ENCODE measurements at regions of chr4 and their contacts with region 1.

Region 1: GRCh38 chr4:80434238-80434637 is 98.7 kb downstream of the CFAP299 start:
- DNase-seq: no peak
- H3K4me3 ChIP-seq: no peak overlapping the region
- H3K27ac ChIP-seq: no peak overlapping the region
- H3K4me1 ChIP-seq: no peaks in the 10 kb centered on the region
- H3K27me3 ChIP-seq: no peaks in the 10 kb centered on the region
- CTCF ChIP-seq: no peak
- EP300 ChIP-seq: no peak
- POLR2A ChIP-seq: no peak

Region 2: GRCh38 chr4:80492761-80493160 is 58.5 kb after region 1 on chr4:
- intact Hi-C with region 1: loop called (anchors 2 kb)
- DNase-seq: no peak
- H3K4me3 ChIP-seq: no peak overlapping the region
- H3K27ac ChIP-seq: no peak overlapping the region
- H3K4me1 ChIP-seq: no peaks in the 10 kb centered on the region
- H3K27me3 ChIP-seq: no peaks in the 10 kb centered on the region
- CTCF ChIP-seq: no peak
- EP300 ChIP-seq: no peak
- POLR2A ChIP-seq: no peak

Region 3: DNA sequence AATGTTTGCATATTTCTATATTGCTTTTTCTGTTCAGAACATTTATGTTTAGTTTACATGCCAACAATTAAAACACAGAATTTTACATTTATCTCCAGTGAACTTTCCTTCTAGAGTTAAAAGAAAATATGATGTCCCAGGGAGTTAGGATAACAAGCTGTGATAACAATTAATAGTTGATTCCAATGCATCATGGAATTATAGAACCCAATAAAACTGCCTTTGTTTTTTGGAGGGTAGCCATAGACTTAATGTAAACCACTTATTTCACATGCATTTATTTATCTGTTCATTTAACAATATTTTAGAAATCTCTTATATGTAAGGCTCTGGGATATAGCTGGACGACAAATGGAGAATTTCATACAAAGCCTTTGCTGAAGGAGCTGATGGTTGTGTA is 81.3 kb after region 1 on chr4:
- intact Hi-C with region 1: no loop called
- DNase-seq: no peak
- H3K4me3 ChIP-seq: no peak overlapping the region
- H3K27ac ChIP-seq: no peak overlapping the region
- H3K4me1 ChIP-seq: no peaks in the 10 kb centered on the region
- H3K27me3 ChIP-seq: no peaks in the 10 kb centered on the region
- CTCF ChIP-seq: no peak
- EP300 ChIP-seq: no peak
- POLR2A ChIP-seq: no peak

Region 4: DNA sequence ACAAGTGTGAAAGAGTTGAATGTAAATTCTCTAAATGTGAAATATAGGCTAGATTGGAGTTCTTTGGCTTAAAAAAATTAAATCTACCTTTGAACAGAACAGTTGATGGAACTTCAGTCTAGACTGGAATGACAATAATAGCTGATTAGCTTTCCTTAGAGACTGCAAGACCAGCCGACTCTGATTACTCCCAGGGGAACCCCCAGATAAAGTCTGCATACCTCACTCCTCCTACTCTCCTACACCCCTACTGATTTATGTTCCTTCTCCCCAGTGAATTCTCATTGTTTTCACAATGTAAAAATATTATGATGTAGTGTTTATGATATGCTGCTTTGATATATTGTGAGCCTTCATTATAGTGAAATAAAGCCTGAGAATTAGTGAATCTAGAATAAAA is 142.6 kb after region 1 on chr4:
- intact Hi-C with region 1: no loop called
- DNase-seq: no peak
- H3K4me3 ChIP-seq: no peak overlapping the region
- H3K27ac ChIP-seq: no peak overlapping the region
- H3K4me1 ChIP-seq: peaks cover 0 to 4% (median 0%) of the 10 kb centered on the region in 4 donors
- H3K27me3 ChIP-seq: no peaks in the 10 kb centered on the region
- CTCF ChIP-seq: no peak
- EP300 ChIP-seq: no peak
- POLR2A ChIP-seq: no peak

Region 5: DNA sequence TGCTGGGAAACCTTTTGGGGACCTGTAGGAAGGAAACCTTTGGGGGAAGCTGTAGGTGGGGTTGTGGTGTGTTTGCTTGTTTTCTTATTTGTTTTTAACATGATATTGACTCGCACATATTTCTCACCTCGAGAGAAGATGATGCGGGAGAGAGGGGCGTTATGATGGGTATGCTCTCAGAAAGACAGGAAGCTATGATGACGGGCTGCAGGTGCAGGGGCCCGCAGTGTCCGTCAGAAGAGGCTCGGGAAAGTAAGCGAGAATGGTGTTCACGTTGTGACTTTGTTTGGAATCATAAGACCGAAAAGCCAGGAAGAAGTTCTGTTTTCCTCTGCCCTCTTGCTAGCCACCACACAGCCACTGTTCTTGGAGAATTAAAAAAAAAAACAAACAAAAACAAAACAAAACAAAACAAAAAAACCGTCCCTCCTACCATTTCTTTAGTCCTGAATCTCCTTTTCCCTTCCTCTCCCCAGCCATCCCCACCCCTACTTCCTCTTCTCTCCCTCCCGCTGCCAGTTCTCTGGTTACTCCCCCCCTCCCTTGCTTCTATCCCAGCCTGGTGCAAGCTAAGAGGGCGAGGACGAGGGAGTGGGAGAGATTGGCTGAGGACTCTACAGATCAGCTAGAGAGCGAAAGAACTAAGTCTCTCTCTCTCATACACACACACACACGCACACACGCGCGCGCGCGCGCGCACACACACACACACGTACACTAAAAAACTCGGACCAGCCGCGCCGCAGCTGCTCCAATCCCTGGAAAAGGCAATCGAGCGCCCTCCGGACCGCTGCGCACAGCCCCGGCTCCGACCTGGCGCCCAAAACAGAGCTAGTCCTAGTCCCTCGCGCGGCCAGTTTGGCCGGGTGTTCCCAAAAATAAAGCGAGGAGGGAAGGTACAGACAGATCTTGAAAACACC is 596.1 kb after region 1 on chr4 and contains the start of gene BMP3:
- intact Hi-C with region 1: no loop called
- DNase-seq: peak; percentile 86
- H3K4me3 ChIP-seq: peak within 1 kb of the TSS; percentile 56 to 77 (median 66)
- H3K27ac ChIP-seq: peak within 1 kb of the TSS; percentile 65 to 86 (median 82)
- H3K4me1 ChIP-seq: peaks cover 0 to 15% (median 5%) of the 10 kb centered on the region in 4 donors
- H3K27me3 ChIP-seq: peaks cover 0 to 15% (median 0%) of the 10 kb centered on the region in 3 donors
- CTCF ChIP-seq: no peak
- EP300 ChIP-seq: no peak
- POLR2A ChIP-seq: peak; percentile 31 to 42
- total RNA-seq, gene BMP3: 30.5 to 63.1 (median 40.7) TPM

Measured in sigmoid colon (tissue), 7 donors.